Left cardiac atrium (tissue), 4 donors: ENCODE measurements at regions of chr5 and their contacts with region 1.

Region 1: GRCh38 chr5:54673523-54674225 is 156.1 kb downstream of the SNX18 start:
- DNase-seq: peak; percentile 50
- ATAC-seq: peak; percentile 74 to 91

Region 2: DNA sequence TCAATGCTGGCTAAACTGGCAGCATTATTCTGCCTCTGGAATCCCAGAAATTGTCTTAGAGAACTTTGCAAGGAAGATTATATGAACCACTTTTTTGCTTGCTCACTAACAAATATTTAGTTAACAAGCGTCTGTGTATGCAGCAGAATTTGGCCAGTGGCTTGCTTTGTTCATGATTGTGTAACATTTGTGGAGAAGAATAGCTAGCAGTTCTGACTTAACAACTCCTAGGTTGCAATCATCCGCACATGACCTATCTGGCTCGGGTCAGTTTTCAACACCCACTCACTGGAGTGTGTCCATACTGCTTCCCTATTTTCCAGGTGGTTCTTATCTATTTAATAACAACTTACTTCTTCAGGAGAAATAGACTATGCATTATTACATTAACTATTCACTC is 57.6 kb before region 1 on chr5:
- intact Hi-C with region 1: no loop called
- DNase-seq: no peak
- ATAC-seq: peak; percentile 87 to 92

Region 3: GRCh38 chr5:54713923-54714581 is 40.4 kb after region 1 on chr5:
- intact Hi-C with region 1: loop called in 1 of 2 experiments (anchors 5 kb)
- DNase-seq: no peak
- ATAC-seq: no peak